ENCODE measurements at regions of chr17 and their contacts with region 1.

Region 1: GRCh38 chr17:28750178-28751047 is 6.6 kb downstream of the TRAF4 start:
- DNase-seq: peak; percentile 98
- ATAC-seq: peak; percentile 93
- H3K4me3 Mint-ChIP-seq: no peak overlapping the region
- H3K27ac Mint-ChIP-seq: peak overlapping the region; percentile 38
- H3K4me1 Mint-ChIP-seq: peaks cover 46% of the 10 kb centered on the region
- H3K27me3 Mint-ChIP-seq: no peaks in the 10 kb centered on the region
- CTCF ChIP-seq: peak; percentile 100

Region 2: DNA sequence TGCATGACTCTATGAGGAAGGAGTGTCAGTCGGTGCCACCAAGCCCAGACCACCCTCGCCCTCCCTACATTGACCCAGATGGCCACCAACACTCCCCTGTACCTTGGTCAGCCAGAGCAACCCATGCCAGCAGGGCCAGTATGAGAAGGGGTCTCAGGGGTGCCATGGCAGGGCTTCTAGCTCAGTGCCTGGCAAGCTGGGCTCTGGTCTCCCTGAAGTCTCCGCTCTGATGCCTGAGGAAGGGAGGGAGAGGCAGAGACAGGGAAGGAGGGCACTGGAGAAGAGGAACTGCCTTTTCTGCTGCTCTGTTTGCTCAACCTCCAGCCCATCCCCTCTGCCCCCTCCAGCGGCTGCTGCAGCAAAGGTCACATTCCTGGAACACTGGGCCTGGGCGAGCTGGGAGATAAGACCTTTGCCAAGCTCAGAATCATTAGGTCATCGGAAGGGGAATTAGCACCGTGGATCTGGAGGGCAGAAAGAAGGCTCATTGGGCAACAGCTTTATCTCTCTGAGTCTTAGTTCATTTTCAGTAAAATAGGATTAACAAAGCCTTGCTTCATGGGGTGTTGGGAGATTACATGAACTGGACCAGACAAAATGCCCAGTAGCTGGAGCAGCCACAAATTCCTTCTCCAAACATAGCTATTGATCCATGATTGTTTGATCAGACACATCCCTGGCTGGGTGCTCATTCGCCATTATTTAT is 380.2 kb before region 1 on chr17 and contains the start of gene VTN:
- CTCF ChIA-PET with region 1: no interaction called
- POLR2A ChIA-PET with region 1: no interaction called
- intact Hi-C with region 1: no loop called
- DNase-seq: no peak
- ATAC-seq: no peak
- H3K4me3 Mint-ChIP-seq: peak within 1 kb of the TSS; percentile 84
- H3K27ac Mint-ChIP-seq: peak within 1 kb of the TSS; percentile 86
- H3K4me1 Mint-ChIP-seq: peaks cover 20% of the 10 kb centered on the region
- H3K27me3 Mint-ChIP-seq: no peaks in the 10 kb centered on the region
- CTCF ChIP-seq: no peak
- total RNA-seq, gene VTN: 0.11 TPM in 1 of 2 experiments, not detected in the other

Region 3: DNA sequence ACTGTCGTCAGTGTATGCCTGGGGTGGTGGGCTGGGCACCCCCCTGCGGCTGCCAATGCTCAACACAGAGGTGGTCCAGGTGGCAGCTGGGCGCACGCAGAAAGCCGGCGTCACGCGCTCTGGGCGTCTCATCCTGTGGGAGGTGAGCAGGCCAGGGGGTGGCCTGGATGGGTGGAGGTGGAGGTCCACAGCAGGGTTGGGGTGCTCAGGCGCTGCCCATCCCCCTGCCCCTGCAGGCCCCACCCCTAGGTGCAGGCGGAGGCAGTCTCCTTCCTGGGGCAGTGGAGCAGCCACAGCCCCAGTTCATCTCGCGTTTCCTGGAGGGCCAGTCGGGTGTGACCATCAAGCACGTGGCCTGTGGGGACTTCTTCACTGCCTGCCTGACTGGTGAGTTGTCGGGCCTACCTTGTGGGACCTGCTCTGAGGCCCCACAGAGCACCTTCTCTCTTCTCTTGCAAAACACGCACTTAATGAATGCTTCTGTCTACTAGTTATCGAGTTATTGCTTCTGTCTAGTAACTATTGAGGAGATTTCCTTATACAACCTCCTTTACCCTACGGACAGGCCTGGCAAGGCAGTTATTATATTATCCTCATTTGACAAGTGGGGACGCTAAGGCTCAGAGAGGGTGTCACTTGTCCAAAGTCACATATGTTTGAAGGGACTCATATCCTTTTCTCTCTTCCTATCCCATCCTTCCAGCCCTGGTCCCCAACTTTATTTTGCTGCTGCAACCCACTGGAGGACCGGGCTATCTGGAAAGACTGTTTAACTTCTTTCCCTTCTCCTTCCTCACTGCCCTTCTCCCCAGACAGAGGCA is 12.3 kb before region 1 on chr17:
- CTCF ChIA-PET with region 1: interaction called, 609 read pairs
- POLR2A ChIA-PET with region 1: interaction called, 8 read pairs
- intact Hi-C with region 1: no loop called
- DNase-seq: no peak
- ATAC-seq: peak; percentile 18
- H3K4me3 Mint-ChIP-seq: peak overlapping the region; percentile 44
- H3K27ac Mint-ChIP-seq: peak overlapping the region; percentile 80
- H3K4me1 Mint-ChIP-seq: peaks cover 42% of the 10 kb centered on the region
- H3K27me3 Mint-ChIP-seq: no peaks in the 10 kb centered on the region
- CTCF ChIP-seq: no peak